Activated CD4-positive, alpha-beta T cell treated with anti-CD3 and anti-CD28 coated beads, Interleukin-2, amount 10 ng/mL, durations not matched to agents 24 days and 14 days (primary cell): ENCODE measurements at regions of chr17 and their contacts with region 1.

Region 1: DNA sequence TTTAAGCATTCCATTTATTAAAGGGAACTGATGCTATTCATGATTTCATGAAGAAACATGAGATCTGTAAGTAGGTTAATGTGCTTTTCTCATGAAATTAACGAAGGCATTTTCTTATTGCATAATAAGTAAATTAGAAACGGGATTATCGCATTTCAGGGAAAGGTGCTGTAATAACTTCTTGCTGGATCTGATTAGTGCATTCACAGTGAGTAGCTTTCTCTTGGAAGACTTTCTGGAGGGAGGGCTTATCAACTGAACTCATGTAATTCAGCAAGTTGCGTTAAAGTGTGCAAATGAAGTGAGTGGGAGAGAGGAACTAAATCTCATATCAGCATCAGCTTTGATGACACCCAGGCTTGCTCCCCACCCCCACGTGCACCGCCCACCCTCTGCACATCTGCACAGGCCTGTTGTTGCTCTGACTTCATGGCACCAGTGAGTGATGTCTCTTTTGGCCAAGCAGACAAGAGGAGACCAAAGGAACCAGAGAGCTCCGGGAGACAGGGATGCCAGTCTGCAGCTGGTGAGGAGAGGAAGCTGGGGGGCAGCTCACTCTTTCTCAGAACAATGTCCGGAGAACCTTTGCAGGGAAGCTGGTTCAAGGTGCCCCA is 26.3 kb upstream of the GAS7 start:
- DNase-seq: no peak
- H3K4me3 Mint-ChIP-seq: no peak overlapping the region
- H3K27ac Mint-ChIP-seq: no peak overlapping the region
- H3K4me1 Mint-ChIP-seq: no peaks in the 10 kb centered on the region
- H3K27me3 Mint-ChIP-seq: no peaks in the 10 kb centered on the region

Region 2: GRCh38 chr17:9865586-9865985 is 359.1 kb before region 1 on chr17:
- intact Hi-C with region 1: no loop called
- DNase-seq: no peak
- H3K4me3 Mint-ChIP-seq: no peak overlapping the region
- H3K27ac Mint-ChIP-seq: no peak overlapping the region
- H3K4me1 Mint-ChIP-seq: no peaks in the 10 kb centered on the region
- H3K27me3 Mint-ChIP-seq: no peaks in the 10 kb centered on the region

Region 3: DNA sequence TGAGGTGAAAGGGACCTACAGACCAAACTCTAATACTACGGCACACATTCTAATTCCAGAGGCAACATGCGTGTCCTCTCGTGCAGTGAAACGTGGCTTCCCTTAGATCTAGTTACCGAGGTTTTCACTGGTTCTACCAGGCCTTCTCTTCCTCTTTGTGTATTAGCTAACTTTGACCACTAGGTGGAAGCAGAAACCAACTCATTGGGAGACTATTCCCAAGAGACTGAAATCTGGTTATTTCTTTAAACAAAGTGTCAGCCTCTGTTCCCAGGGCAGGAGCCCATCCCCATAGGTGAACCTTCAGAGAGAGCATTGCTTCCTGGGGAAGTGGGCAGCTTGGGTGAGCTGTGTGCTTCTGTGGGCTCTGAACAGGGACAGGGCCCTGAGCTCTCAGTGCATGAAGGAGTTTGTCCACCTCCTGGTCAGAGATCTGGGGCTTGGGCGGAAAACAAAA is 299.9 kb before region 1 on chr17:
- intact Hi-C with region 1: loop called (anchors 2 kb)
- DNase-seq: peak; percentile 76
- H3K4me3 Mint-ChIP-seq: no peak overlapping the region
- H3K27ac Mint-ChIP-seq: no peak overlapping the region
- H3K4me1 Mint-ChIP-seq: no peaks in the 10 kb centered on the region
- H3K27me3 Mint-ChIP-seq: no peaks in the 10 kb centered on the region